Naive thymus-derived CD4-positive, alpha-beta T cell (primary cell): ENCODE measurements at regions of chr15 and their contacts with region 1.

Region 1: DNA sequence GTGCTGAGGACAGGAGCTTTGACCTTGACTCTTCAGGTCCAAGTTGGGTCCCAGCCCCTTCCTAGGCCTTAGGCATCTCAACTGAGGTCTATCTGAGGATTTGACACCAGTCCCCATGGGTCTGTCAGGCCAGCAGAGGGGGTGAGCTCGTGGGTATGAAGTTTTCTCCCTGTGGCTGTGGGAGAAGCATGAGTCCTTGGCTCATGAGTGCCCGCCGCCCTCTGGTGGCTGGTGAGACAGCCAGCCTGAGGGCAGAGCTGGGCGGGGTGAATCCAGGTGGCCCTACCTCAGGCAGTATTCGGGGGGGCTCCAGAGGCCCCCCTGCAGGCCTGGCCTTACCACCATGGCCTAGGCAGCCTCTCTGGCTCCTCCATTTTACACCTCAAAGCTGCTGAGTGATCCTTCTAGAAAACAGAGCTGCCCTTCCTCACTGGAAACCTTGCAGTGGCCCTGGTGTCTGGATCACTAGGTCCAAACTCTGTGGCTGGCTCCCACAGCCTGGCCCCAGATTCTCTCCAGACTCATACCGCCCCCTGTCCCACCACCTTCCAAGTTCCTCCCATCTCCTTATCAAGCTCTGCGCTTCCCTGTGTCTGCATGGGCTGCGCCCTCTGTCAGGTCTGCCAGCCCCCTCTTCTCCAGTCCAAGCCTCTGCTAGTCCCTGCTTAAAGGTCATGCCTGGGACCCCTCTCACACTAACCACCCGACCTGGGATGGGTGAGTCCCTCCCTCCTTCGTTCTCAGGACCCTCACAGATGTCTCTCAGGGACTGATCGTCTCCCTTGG is 16.1 kb downstream of the SH2D7 start:
- DNase-seq: peak; percentile 73 to 86 (median 82)
- ATAC-seq: peak; percentile 91
- H3K4me3 ChIP-seq: no peak overlapping the region
- H3K4me3 Mint-ChIP-seq: peak overlapping the region in 1 of 10 donors; percentile 40
- H3K27ac ChIP-seq: no peak overlapping the region
- H3K27ac Mint-ChIP-seq: peak overlapping the region in 6 of 9 donors; percentile 14 to 69 (median 52)
- H3K4me1 ChIP-seq: peaks cover 18 to 32% of the 10 kb centered on the region in 2 donors
- H3K4me1 Mint-ChIP-seq: peaks cover 25 to 57% (median 28%) of the 10 kb centered on the region in 7 donors
- H3K27me3 ChIP-seq: no peaks in the 10 kb centered on the region
- H3K27me3 Mint-ChIP-seq: no peaks in the 10 kb centered on the region

Region 2: GRCh38 chr15:76885212-76885611 is 1223.3 kb before region 1 on chr15:
- CTCF ChIA-PET with region 1: no interaction called
- POLR2A ChIA-PET with region 1: no interaction called
- intact Hi-C with region 1: no loop called
- DNase-seq: no peak
- ATAC-seq: no peak
- H3K4me3 ChIP-seq: no peak overlapping the region
- H3K4me3 Mint-ChIP-seq: no peak overlapping the region
- H3K27ac ChIP-seq: no peak overlapping the region
- H3K27ac Mint-ChIP-seq: no peak overlapping the region
- H3K4me1 ChIP-seq: no peaks in the 10 kb centered on the region
- H3K4me1 Mint-ChIP-seq: peaks cover 9 to 40% (median 30%) of the 10 kb centered on the region in 7 donors
- H3K27me3 ChIP-seq: no peaks in the 10 kb centered on the region
- H3K27me3 Mint-ChIP-seq: no peaks in the 10 kb centered on the region

Region 3: GRCh38 chr15:77496710-77497103 is 611.8 kb before region 1 on chr15:
- CTCF ChIA-PET with region 1: no interaction called
- POLR2A ChIA-PET with region 1: no interaction called
- intact Hi-C with region 1: no loop called
- DNase-seq: peak; percentile 37 to 76 (median 60)
- ATAC-seq: peak; percentile 84
- H3K4me3 ChIP-seq: no peak overlapping the region
- H3K4me3 Mint-ChIP-seq: no peak overlapping the region
- H3K27ac ChIP-seq: no peak overlapping the region
- H3K27ac Mint-ChIP-seq: no peak overlapping the region
- H3K4me1 ChIP-seq: peaks cover 3 to 5% of the 10 kb centered on the region in 2 donors
- H3K4me1 Mint-ChIP-seq: peaks cover 13 to 29% (median 24%) of the 10 kb centered on the region in 7 donors
- H3K27me3 ChIP-seq: no peaks in the 10 kb centered on the region
- H3K27me3 Mint-ChIP-seq: no peaks in the 10 kb centered on the region

Region 4: GRCh38 chr15:77907824-77908751 is 200.4 kb before region 1 on chr15:
- CTCF ChIA-PET with region 1: interaction called, 4 read pairs
- POLR2A ChIA-PET with region 1: no interaction called
- intact Hi-C with region 1: loop called in 1 of 2 experiments (anchors 1 kb)
- DNase-seq: peak in 4 of 9 donors; percentile 12 to 26 (median 18)
- ATAC-seq: peak; percentile 36
- H3K4me3 ChIP-seq: no peak overlapping the region
- H3K4me3 Mint-ChIP-seq: no peak overlapping the region
- H3K27ac ChIP-seq: no peak overlapping the region
- H3K27ac Mint-ChIP-seq: no peak overlapping the region
- H3K4me1 ChIP-seq: no peaks in the 10 kb centered on the region
- H3K4me1 Mint-ChIP-seq: peaks cover 0 to 5% (median 0%) of the 10 kb centered on the region in 7 donors
- H3K27me3 ChIP-seq: no peaks in the 10 kb centered on the region
- H3K27me3 Mint-ChIP-seq: peaks cover 0 to 4% (median 0%) of the 10 kb centered on the region in 5 donors

Region 5: GRCh38 chr15:78000091-78000926 is 108.2 kb before region 1 on chr15:
- CTCF ChIA-PET with region 1: interaction called, 28 read pairs
- POLR2A ChIA-PET with region 1: interaction called, 9 read pairs
- intact Hi-C with region 1: loop called in 1 of 2 experiments (anchors 1 kb)
- DNase-seq: peak; percentile 66 to 82 (median 78)
- ATAC-seq: peak; percentile 100
- H3K4me3 ChIP-seq: no peak overlapping the region
- H3K4me3 Mint-ChIP-seq: no peak overlapping the region
- H3K27ac ChIP-seq: no peak overlapping the region
- H3K27ac Mint-ChIP-seq: peak overlapping the region; percentile 19 to 87 (median 68)
- H3K4me1 ChIP-seq: no peaks in the 10 kb centered on the region
- H3K4me1 Mint-ChIP-seq: peaks cover 0 to 26% (median 5%) of the 10 kb centered on the region in 7 donors
- H3K27me3 ChIP-seq: no peaks in the 10 kb centered on the region
- H3K27me3 Mint-ChIP-seq: no peaks in the 10 kb centered on the region

Region 6: GRCh38 chr15:78065284-78065872 is 43.1 kb before region 1 on chr15:
- CTCF ChIA-PET with region 1: interaction called, 11 read pairs
- POLR2A ChIA-PET with region 1: no interaction called
- intact Hi-C with region 1: loop called in 1 of 2 experiments (anchors 5 kb)
- DNase-seq: no peak
- ATAC-seq: peak; percentile 24
- H3K4me3 ChIP-seq: peak overlapping the region; percentile 25
- H3K4me3 Mint-ChIP-seq: no peak overlapping the region
- H3K27ac ChIP-seq: peak overlapping the region; percentile 17
- H3K27ac Mint-ChIP-seq: peak overlapping the region in 1 of 9 donors; percentile 94
- H3K4me1 ChIP-seq: peaks cover 82 to 84% of the 10 kb centered on the region in 2 donors
- H3K4me1 Mint-ChIP-seq: peaks cover 1 to 64% (median 3%) of the 10 kb centered on the region in 7 donors
- H3K27me3 ChIP-seq: no peaks in the 10 kb centered on the region
- H3K27me3 Mint-ChIP-seq: no peaks in the 10 kb centered on the region

Region 7: GRCh38 chr15:78149068-78149804 is 40.7 kb after region 1 on chr15 and contains the start of gene IDH3A:
- CTCF ChIA-PET with region 1: no interaction called
- POLR2A ChIA-PET with region 1: interaction called, 4 read pairs
- intact Hi-C with region 1: loop called in 1 of 2 experiments (anchors 1 kb)
- DNase-seq: peak; percentile 97 to 100 (median 99)
- ATAC-seq: peak; percentile 99
- H3K4me3 ChIP-seq: peak within 1 kb of the TSS; percentile 76
- H3K4me3 Mint-ChIP-seq: peak within 1 kb of the TSS; percentile 93 to 98 (median 96)
- H3K27ac ChIP-seq: peak within 1 kb of the TSS; percentile 77
- H3K27ac Mint-ChIP-seq: peak within 1 kb of the TSS; percentile 91 to 97 (median 95)
- H3K4me1 ChIP-seq: peaks cover 17 to 24% of the 10 kb centered on the region in 2 donors
- H3K4me1 Mint-ChIP-seq: peaks cover 25 to 51% (median 43%) of the 10 kb centered on the region in 7 donors
- H3K27me3 ChIP-seq: no peaks in the 10 kb centered on the region
- H3K27me3 Mint-ChIP-seq: no peaks in the 10 kb centered on the region
- total RNA-seq, gene IDH3A: 44.4 to 105 (median 61.1) TPM

Region 8: DNA sequence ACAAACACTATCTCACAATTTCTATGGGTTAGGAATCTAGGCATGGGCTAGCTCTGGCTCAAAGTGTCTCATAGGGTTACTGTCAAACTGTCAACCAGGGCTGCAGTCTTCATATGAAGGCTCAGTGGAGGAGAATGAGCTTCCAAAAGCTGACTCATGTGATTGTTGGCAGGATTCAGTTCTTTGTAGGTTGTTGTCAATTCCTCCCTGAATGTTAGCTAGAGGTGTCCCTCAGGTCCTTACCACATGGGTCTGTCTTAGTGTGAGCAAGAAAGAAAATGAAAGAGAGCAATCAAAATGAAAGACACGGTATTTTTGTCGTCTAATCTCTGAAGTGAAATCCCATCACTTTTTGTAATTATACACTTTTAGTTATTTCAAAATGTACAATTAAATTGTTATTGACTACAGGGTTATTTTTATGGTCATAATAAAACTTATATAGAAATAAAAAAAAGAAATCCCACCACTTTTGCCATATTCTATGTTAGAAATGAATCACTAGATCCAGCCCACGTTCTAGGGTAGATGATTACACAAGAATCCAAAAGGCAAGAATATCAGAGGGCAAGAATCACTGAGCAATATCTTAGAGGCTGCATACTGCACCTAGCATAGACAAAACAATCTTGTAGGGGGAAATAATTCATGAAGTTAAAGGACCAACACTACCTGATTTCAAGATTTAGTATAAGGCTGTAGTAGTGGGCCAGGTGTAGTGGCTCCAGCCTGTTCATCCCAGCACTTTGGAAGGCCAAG is 117.5 kb after region 1 on chr15:
- CTCF ChIA-PET with region 1: no interaction called
- POLR2A ChIA-PET with region 1: no interaction called
- intact Hi-C with region 1: no loop called
- DNase-seq: no peak
- ATAC-seq: no peak
- H3K4me3 ChIP-seq: no peak overlapping the region
- H3K4me3 Mint-ChIP-seq: peak overlapping the region in 1 of 10 donors; percentile 26
- H3K27ac ChIP-seq: no peak overlapping the region
- H3K27ac Mint-ChIP-seq: peak overlapping the region in 1 of 9 donors; percentile 22
- H3K4me1 ChIP-seq: peaks cover 0 to 6% of the 10 kb centered on the region in 2 donors
- H3K4me1 Mint-ChIP-seq: peaks cover 0 to 2% (median 0%) of the 10 kb centered on the region in 7 donors
- H3K27me3 ChIP-seq: no peaks in the 10 kb centered on the region
- H3K27me3 Mint-ChIP-seq: peaks cover 0 to 8% (median 0%) of the 10 kb centered on the region in 5 donors

Region 9: GRCh38 chr15:78422571-78423340 is 314.3 kb after region 1 on chr15:
- CTCF ChIA-PET with region 1: no interaction called
- POLR2A ChIA-PET with region 1: no interaction called
- intact Hi-C with region 1: loop called in 1 of 2 experiments (anchors 1 kb)
- DNase-seq: peak; percentile 34 to 62 (median 54)
- ATAC-seq: peak; percentile 94
- H3K4me3 ChIP-seq: no peak overlapping the region
- H3K4me3 Mint-ChIP-seq: no peak overlapping the region
- H3K27ac ChIP-seq: no peak overlapping the region
- H3K27ac Mint-ChIP-seq: no peak overlapping the region
- H3K4me1 ChIP-seq: no peaks in the 10 kb centered on the region
- H3K4me1 Mint-ChIP-seq: peaks cover 9 to 19% (median 15%) of the 10 kb centered on the region in 7 donors
- H3K27me3 ChIP-seq: peaks cover 0 to 4% of the 10 kb centered on the region in 2 donors
- H3K27me3 Mint-ChIP-seq: peaks cover 5 to 17% (median 11%) of the 10 kb centered on the region in 5 donors

Region 10: DNA sequence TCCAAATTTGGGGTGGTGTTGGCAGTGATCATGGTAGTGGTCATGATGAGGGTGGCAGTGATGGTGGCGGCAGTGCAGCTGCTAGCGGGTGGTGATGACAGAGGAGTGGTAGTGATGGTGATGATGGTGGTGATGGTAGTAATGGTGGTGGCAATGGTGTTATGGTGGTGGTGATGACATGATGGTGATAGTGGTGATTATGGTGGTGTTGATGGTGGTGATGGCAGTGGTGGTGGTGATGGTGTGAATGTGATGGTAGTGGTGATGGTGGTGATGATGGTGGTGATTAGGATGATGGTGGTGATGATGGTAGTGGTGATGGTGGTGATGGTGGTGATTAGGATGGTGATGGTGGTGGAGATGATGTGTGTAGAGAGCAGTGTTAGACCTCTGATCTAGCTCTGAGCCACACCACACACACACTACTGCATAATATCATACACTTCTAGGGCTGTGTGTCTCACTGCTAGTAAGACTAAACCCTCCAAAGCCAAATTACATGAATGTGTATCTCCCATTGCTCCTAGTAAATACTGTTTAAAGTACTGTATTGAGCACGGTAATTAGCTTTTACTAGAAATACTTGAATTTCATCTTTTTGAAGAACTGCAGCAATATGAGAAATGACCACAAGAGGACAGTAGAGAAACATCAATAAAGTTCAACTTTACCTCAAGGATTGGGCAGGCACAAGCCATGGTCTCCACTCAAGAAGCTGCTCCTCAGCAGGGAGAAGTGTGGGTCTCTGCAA is 1231.2 kb after region 1 on chr15:
- CTCF ChIA-PET with region 1: no interaction called
- POLR2A ChIA-PET with region 1: no interaction called
- intact Hi-C with region 1: no loop called
- DNase-seq: peak in 2 of 9 donors; percentile 3 to 19
- ATAC-seq: no peak
- H3K4me3 ChIP-seq: no peak overlapping the region
- H3K4me3 Mint-ChIP-seq: no peak overlapping the region
- H3K27ac ChIP-seq: no peak overlapping the region
- H3K27ac Mint-ChIP-seq: peak overlapping the region in 1 of 9 donors; percentile 16
- H3K4me1 ChIP-seq: no peaks in the 10 kb centered on the region
- H3K4me1 Mint-ChIP-seq: peaks cover 0 to 3% (median 0%) of the 10 kb centered on the region in 7 donors
- H3K27me3 ChIP-seq: no peaks in the 10 kb centered on the region
- H3K27me3 Mint-ChIP-seq: no peaks in the 10 kb centered on the region